ENCODE measurements at regions of chrX and their contacts with region 1.

Region 1: GRCh38 chrX:15468036-15468435 is 25.1 kb downstream of the PIR start:
- DNase-seq: no peak
- ATAC-seq: peak; percentile 28
- H3K4me3 Mint-ChIP-seq: no peak overlapping the region
- H3K27ac Mint-ChIP-seq: no peak overlapping the region
- H3K4me1 Mint-ChIP-seq: peaks cover 9% of the 10 kb centered on the region
- H3K27me3 Mint-ChIP-seq: no peaks in the 10 kb centered on the region
- CTCF ChIP-seq: no peak

Region 2: DNA sequence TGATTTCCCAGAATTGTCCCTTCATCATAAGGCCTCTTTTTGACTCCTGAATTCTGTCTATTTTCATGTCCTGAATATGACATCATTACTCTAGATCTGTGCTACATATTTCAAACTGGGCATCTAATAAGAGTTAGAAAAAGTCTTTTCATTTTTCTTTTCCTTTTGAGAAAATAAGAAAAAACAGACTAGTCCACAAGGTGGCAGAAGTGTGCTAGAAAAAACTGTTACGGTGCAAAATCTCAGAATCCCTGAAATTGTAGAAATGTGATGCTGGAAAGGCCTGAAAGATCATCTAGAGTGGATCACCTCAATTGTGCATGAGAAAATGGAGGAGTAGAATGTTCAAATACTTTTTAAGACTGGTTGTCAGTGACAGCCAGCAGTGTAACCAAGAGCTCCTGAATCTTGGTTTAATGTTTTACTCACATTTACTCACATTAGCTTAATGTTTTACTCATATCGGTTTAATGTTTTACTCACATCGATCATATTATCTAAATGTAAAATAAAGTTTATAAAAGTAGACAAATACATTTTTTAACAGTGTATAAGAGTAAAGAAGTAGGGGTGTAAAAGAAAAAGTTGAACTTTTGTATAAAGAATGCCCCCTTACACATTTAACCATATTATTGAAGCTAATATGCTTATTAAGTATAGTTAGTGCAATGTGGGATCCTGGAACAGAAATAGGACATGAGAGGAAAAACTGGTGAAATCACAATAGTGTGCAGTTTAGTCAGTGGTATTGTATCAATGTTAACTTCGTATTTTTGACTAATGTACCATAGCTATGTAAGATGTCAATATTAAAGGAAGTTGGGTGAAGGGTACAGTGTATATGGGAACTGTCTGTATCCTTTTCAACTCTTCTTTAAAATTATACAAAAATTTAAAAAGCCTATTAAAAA is 167.8 kb before region 1 on chrX:
- CTCF ChIA-PET with region 1: interaction called, 4 read pairs
- POLR2A ChIA-PET with region 1: no interaction called
- intact Hi-C with region 1: loop called (anchors 2 kb)
- DNase-seq: no peak
- ATAC-seq: no peak
- H3K4me3 Mint-ChIP-seq: no peak overlapping the region
- H3K27ac Mint-ChIP-seq: no peak overlapping the region
- H3K4me1 Mint-ChIP-seq: peaks cover 2% of the 10 kb centered on the region
- H3K27me3 Mint-ChIP-seq: no peaks in the 10 kb centered on the region
- CTCF ChIP-seq: no peak

Region 3: GRCh38 chrX:15349046-15349445 is 119.0 kb before region 1 on chrX:
- CTCF ChIA-PET with region 1: interaction called, 28 read pairs
- POLR2A ChIA-PET with region 1: no interaction called
- intact Hi-C with region 1: loop called (anchors 1 kb)
- DNase-seq: no peak
- ATAC-seq: peak; percentile 40
- H3K4me3 Mint-ChIP-seq: no peak overlapping the region
- H3K27ac Mint-ChIP-seq: no peak overlapping the region
- H3K4me1 Mint-ChIP-seq: no peaks in the 10 kb centered on the region
- H3K27me3 Mint-ChIP-seq: no peaks in the 10 kb centered on the region
- CTCF ChIP-seq: no peak